HCT116 (cell line): ENCODE measurements at regions of chr21 and their contacts with region 1.

Region 1: DNA sequence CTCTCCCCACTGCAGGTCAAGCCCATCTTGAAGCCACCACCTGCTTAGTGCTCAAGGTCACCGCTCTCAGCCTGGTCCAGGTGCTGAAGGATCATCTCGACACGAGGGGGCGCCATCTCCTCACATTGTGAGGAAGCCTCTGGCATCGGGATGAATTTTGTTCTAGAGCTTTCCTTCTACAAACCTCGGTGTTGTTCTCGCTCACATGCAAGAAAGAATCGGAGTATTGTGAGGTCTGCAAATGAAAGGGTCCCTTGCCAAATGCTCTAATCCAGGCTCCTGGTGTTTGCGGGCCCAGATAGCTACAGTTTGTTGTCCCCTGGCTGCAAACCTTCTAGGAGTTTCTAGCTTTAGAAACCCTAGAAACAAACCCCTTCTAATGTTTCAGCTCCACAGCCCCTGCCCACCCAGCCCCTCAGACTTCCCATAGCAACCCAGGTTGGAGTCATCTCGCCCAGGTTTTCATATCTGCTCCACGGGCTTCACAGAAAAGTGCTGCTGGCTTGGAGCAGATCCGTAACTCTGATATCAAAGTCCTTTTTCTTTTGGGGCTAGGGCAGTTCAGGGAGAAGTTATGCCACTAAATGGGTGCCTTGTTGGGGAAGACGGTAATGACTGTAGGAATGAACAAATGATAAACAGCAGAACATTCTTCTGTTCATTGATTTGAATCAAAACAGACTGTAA is 8.6 kb upstream of the ATP5PO start:
- DNase-seq: peak; percentile 69
- ATAC-seq: peak; percentile 99
- H3K4me3 ChIP-seq: no peak overlapping the region
- H3K27ac ChIP-seq: no peak overlapping the region
- H3K4me1 ChIP-seq: peaks cover 0 to 10% of the 10 kb centered on the region in 2 experiments; a peak in 2 of 4 replicates
- H3K27me3 ChIP-seq: no peaks in the 10 kb centered on the region
- CTCF ChIP-seq: peak; percentile 83 to 96 (median 88)
- POLR2A ChIP-seq: no peak
- RAD21 ChIP-seq: peak; percentile 96

Region 2: DNA sequence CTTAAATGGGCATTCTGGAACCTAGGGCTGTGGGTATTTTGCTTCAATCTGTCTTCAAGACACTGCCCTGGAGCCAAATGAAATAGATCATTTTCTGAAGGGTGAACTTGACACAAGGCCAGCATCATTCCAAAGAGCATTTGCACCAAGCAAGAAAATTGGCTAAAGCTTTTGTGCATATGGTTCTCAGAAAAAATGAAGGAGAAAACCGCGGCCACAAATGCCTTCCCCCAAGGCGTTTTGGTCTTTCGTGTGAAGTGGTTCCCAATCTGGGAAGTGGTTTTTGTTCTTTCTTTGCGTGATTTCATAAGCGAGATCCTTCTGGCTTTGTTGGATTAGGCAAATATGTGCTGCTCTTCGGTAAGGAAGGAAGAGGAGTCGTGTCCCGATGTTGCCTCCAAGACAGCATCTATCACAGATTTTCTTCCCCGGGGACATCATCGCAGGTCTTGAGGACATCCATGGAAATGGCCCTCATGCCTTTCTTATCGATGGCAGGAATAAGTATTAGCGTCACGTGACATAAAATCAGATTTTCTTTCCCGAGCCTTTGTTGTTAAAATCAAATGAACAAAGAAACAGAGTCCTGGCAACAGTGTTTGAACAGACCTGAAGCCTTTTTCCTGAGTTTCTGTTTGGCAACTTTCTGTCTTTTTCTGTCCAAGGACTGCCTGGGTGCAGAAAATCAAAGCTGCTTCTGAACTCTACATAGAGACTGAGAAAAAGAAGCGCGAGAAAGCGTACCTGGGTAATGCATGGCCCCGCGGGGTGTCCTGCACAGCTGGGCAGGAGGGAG is 39.6 kb before region 1 on chr21:
- CTCF ChIA-PET with region 1: no interaction called
- POLR2A ChIA-PET with region 1: no interaction called
- RAD21 ChIA-PET with region 1: no interaction called
- intact Hi-C with region 1: no loop called
- DNase-seq: no peak
- ATAC-seq: no peak
- H3K4me3 ChIP-seq: no peak overlapping the region
- H3K27ac ChIP-seq: no peak overlapping the region
- H3K4me1 ChIP-seq: no peaks in the 10 kb centered on the region
- H3K27me3 ChIP-seq: no peaks in the 10 kb centered on the region; the same call in 1 of the 2 replicates
- CTCF ChIP-seq: no peak
- POLR2A ChIP-seq: no peak
- RAD21 ChIP-seq: no peak

Region 3: GRCh38 chr21:34202553-34203372 is 278.5 kb after region 1 on chr21:
- CTCF ChIA-PET with region 1: interaction called, 12 read pairs
- POLR2A ChIA-PET with region 1: no interaction called
- RAD21 ChIA-PET with region 1: interaction called in 1 of 2 experiments, 3 read pairs
- intact Hi-C with region 1: no loop called
- DNase-seq: peak; percentile 3
- ATAC-seq: peak; percentile 44
- H3K4me3 ChIP-seq: peak overlapping the region; percentile 41 to 43
- H3K27ac ChIP-seq: peak overlapping the region; percentile 6; the same call in 1 of the 2 replicates
- H3K4me1 ChIP-seq: peaks cover 8 to 17% of the 10 kb centered on the region in 2 experiments
- H3K27me3 ChIP-seq: no peaks in the 10 kb centered on the region
- CTCF ChIP-seq: no peak
- POLR2A ChIP-seq: no peak
- RAD21 ChIP-seq: no peak

Region 4: DNA sequence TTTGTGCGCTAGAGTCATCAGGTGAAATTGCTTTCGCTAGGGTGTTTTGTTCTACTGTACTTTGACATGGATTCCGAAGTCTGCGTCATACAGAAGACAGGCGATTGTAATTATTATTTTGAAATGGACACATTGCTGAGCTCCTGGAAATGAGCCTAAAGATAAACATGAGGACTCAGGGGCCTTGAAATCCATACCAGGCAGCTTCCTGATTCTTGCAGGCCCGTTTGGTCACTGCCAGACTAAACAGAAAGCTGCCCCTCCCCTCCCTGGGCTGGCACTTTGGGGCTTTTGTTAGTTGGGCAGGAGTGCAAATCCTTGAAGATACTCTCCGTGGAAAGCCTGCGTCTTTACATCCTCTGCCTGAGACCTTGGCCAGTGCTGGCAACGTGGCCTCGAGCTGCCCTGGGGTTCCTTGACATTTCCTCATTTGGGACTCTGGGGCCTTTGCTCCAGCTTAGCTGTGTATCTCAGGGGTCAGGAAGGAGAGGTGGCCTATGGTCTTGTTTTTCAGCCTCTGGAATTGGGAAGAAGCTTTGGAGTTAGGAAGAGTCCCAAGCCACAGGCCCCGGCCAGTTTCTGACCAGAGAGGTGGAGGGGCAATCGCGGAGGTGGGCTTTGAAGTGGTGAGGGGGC is 412.7 kb after region 1 on chr21:
- CTCF ChIA-PET with region 1: no interaction called
- POLR2A ChIA-PET with region 1: no interaction called
- RAD21 ChIA-PET with region 1: no interaction called
- intact Hi-C with region 1: loop called (anchors 10 kb)
- DNase-seq: no peak
- ATAC-seq: no peak
- H3K4me3 ChIP-seq: no peak overlapping the region
- H3K27ac ChIP-seq: no peak overlapping the region
- H3K4me1 ChIP-seq: peaks cover 0 to 6% of the 10 kb centered on the region in 2 experiments; a peak in 2 of 4 replicates
- H3K27me3 ChIP-seq: no peaks in the 10 kb centered on the region
- CTCF ChIP-seq: no peak
- POLR2A ChIP-seq: no peak
- RAD21 ChIP-seq: no peak

Region 5: GRCh38 chr21:34362136-34362444 is 437.9 kb after region 1 on chr21:
- CTCF ChIA-PET with region 1: interaction called, 14 read pairs
- POLR2A ChIA-PET with region 1: no interaction called
- RAD21 ChIA-PET with region 1: no interaction called
- intact Hi-C with region 1: no loop called
- DNase-seq: no peak
- ATAC-seq: peak; percentile 51
- H3K4me3 ChIP-seq: no peak overlapping the region
- H3K27ac ChIP-seq: no peak overlapping the region
- H3K4me1 ChIP-seq: peaks cover 4 to 7% of the 10 kb centered on the region in 2 experiments
- H3K27me3 ChIP-seq: no peaks in the 10 kb centered on the region
- CTCF ChIP-seq: no peak
- POLR2A ChIP-seq: no peak
- RAD21 ChIP-seq: no peak

Region 6: DNA sequence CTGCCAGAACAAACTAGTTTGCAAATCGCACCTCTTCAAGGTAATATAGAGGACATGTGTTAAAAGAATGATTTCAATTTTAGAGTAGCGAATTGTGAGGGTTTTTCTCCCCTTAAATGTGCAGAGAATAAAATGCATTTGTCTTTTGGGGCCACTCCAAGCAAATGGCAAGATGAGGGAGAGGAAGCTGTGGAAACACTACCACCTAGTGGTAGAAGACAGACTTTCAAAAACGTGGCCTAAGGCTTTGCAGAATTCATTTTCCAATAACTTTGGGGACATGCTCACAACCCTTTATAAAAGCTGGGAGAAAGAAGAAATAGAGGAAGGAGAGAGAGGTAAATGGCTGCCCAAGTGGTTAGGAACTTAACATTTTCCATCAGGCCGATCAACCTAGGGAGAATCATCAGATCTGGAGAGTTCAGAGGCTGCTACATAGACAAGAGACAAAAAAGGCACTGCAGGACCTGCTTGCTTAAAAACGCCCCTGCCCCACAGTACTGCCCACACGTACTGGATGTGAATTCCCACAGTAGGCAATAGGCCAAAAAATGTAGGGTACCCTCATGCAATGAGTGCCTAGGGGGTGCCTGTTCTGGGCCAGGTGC is 706.4 kb after region 1 on chr21:
- CTCF ChIA-PET with region 1: no interaction called
- POLR2A ChIA-PET with region 1: no interaction called
- RAD21 ChIA-PET with region 1: no interaction called
- intact Hi-C with region 1: loop called (anchors 5 kb)
- DNase-seq: peak; percentile 45
- ATAC-seq: peak; percentile 86
- H3K4me3 ChIP-seq: no peak overlapping the region
- H3K27ac ChIP-seq: no peak overlapping the region
- H3K4me1 ChIP-seq: no peaks in the 10 kb centered on the region
- H3K27me3 ChIP-seq: 0 out of 2 replicates have a peak, but pooled peaks cover 7% of the 10 kb centered on the region
- CTCF ChIP-seq: peak; percentile 79 to 86 (median 80); a peak in 5 of 6 replicates
- POLR2A ChIP-seq: no peak
- RAD21 ChIP-seq: peak; percentile 89